WTC11 (cell line): ENCODE measurements at regions of chr12 and their contacts with region 1.

Region 1: DNA sequence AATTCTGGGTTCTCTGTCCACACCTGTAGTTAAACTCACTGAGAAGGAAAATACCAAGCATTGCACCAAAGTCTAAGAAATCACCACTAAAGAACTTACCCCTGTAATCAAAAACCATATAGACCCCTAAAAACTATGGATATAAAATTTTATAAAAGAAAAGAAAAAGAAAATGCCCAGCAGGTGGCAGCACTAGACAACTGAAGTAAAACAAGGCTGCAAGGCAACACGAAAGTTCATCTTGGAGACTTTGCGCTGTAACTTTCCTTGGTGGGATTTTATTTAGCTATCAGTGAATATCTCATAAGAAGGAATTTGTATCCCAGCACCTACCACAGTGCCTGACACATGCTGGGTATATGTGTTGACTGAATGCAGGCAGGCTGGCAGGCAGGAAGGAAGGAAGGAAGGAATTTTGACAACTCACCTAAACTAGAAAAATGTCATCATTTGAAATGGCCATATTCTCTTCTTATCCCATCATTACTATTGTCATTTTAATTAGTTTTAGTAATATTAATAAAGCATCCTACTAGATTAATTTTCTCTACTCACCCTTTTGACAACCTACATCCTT is 68.2 kb upstream of the ETV6 start:
- DNase-seq: peak; percentile 48
- ATAC-seq: no peak
- H3K4me3 Mint-ChIP-seq: no peak overlapping the region
- H3K27ac Mint-ChIP-seq: no peak overlapping the region; the same call in 1 of the 2 replicates
- H3K4me1 Mint-ChIP-seq: peaks cover 11% of the 10 kb centered on the region
- H3K27me3 Mint-ChIP-seq: no peaks in the 10 kb centered on the region
- CTCF ChIP-seq: peak; percentile 55

Region 2: GRCh38 chr12:11621797-11622423 is 40.6 kb after region 1 on chr12:
- CTCF ChIA-PET with region 1: interaction called, 22 read pairs
- POLR2A ChIA-PET with region 1: no interaction called
- DNase-seq: no peak
- ATAC-seq: peak; percentile 17; the same call in 1 of the 2 replicates
- H3K4me3 Mint-ChIP-seq: no peak overlapping the region
- H3K27ac Mint-ChIP-seq: peak overlapping the region; percentile 19
- H3K4me1 Mint-ChIP-seq: peaks cover 57% of the 10 kb centered on the region
- H3K27me3 Mint-ChIP-seq: no peaks in the 10 kb centered on the region
- CTCF ChIP-seq: no peak

Region 3: DNA sequence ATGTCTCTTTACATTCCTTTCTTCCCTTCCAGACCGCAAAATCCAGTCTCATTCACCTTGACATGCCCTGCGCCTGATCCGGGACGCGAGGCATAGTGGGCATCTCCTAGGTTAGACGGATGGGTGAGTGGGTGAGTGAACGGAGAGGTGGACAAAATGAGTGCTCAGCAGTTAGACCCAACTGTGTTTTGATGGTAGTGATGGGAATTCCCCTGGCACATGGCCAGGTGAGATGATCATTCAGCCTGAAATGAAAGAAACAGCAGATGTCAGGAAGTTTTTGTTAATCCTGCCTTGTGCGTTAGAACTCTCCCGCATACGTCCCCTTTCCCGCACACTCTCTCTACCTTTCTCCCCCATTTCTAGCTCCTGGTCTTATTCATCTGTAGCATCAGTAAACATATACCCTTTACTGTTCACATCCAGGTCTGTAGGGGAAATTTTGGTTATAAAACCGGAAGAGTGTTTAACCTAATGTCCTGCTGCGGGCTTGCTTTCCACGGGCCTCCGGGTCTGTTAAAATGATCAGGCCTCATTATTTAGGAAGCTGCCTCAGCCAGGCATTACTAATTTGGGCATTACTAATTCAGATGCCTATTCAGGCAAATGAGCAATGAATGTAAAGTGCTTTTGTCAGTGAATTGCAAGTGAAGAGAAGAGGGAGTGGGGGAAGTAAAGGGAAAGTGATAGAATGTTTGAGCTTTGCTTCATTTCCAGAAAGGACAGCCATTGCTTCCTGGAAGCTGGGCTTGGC is 241.0 kb after region 1 on chr12:
- CTCF ChIA-PET with region 1: no interaction called
- POLR2A ChIA-PET with region 1: no interaction called
- DNase-seq: no peak
- ATAC-seq: no peak
- H3K4me3 Mint-ChIP-seq: no peak overlapping the region
- H3K27ac Mint-ChIP-seq: peak overlapping the region; percentile 91
- H3K4me1 Mint-ChIP-seq: peaks cover 44% of the 10 kb centered on the region
- H3K27me3 Mint-ChIP-seq: no peaks in the 10 kb centered on the region
- CTCF ChIP-seq: no peak

Region 4: GRCh38 chr12:11949738-11950411 is 368.6 kb after region 1 on chr12:
- CTCF ChIA-PET with region 1: no interaction called
- POLR2A ChIA-PET with region 1: interaction called, 11 read pairs
- DNase-seq: no peak
- ATAC-seq: no peak
- H3K4me3 Mint-ChIP-seq: no peak overlapping the region
- H3K27ac Mint-ChIP-seq: no peak overlapping the region
- H3K4me1 Mint-ChIP-seq: peaks cover 4% of the 10 kb centered on the region; the same call in 1 of the 2 replicates
- H3K27me3 Mint-ChIP-seq: no peaks in the 10 kb centered on the region
- CTCF ChIP-seq: no peak

Region 5: DNA sequence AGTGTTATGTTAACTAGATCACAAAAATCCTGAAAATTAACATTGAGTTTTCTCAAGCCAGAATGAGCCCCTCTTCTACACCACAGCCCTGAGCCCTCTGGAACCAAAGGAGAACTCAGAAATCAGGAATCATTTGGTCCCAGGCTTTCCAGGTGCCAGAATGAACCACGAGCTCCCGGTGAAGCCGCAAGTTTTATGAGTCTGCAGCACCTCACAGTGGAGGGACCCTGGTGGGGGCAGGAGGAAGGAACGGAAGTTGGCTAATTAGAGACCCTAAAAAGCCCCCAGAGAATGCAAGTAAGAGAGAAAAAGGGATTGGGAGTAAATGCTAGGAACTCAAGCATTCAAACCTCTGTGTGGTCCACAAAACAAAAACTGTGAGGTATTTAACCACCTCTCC is 436.5 kb after region 1 on chr12:
- CTCF ChIA-PET with region 1: interaction called, 24 read pairs
- POLR2A ChIA-PET with region 1: no interaction called
- DNase-seq: peak; percentile 61
- ATAC-seq: peak; percentile 90
- H3K4me3 Mint-ChIP-seq: no peak overlapping the region
- H3K27ac Mint-ChIP-seq: no peak overlapping the region
- H3K4me1 Mint-ChIP-seq: peaks cover 13% of the 10 kb centered on the region
- H3K27me3 Mint-ChIP-seq: no peaks in the 10 kb centered on the region
- CTCF ChIP-seq: no peak; the same call in 1 of the 2 replicates